ENCODE measurements at regions of chr19 and their contacts with region 1.

Region 1: GRCh38 chr19:34974646-34975045 is 10.6 kb upstream of the ZNF792 start:
- DNase-seq: no peak
- ATAC-seq: peak in 1 of 2 donors; percentile 7
- H3K4me3 ChIP-seq: no peak overlapping the region
- H3K27ac ChIP-seq: no peak overlapping the region
- H3K4me1 ChIP-seq: peaks cover 21% of the 10 kb centered on the region
- H3K27me3 ChIP-seq: no peaks in the 10 kb centered on the region
- CTCF ChIP-seq: no peak

Region 2: DNA sequence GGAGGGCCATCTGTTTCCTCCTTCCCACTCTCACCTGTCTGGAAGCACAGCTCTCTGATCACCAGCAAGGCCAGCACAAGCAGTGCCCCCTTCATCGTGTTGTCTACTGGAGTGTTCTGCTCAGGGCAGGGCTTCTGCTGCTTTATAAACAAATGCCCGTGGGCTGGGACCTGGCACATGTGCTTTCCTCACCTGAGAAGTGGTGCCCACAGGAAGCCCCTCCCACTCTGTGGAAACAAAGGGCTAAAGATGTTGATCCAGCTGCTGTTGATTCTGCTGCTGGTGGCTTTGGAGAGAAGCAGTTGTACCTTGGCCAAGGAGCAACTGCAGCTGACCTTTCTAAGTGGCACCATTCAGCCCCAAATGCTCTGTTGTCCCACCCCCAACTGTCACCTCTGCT is 267.0 kb before region 1 on chr19:
- intact Hi-C with region 1: no loop called
- DNase-seq: no peak
- ATAC-seq: no peak
- H3K4me3 ChIP-seq: no peak overlapping the region
- H3K27ac ChIP-seq: no peak overlapping the region
- H3K4me1 ChIP-seq: no peaks in the 10 kb centered on the region
- H3K27me3 ChIP-seq: no peaks in the 10 kb centered on the region
- CTCF ChIP-seq: no peak

Region 3: DNA sequence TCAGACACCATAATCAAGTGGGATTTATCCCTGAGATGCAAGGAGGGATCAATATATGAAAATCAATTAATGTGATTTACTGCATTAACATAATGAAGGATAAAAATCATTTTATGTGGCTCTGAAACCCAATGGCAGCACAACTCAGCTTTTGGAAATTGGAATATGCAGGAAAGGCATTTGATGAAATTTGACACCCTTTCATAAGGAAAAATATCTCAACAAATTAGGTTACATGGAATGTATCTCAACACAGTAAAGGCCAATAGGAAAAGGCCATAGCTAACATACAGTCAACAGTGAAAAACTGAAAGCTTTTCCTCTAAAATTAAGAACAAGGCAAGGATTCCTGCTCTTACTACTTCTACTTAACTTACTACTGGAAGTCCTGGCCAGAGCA is 79.9 kb before region 1 on chr19:
- intact Hi-C with region 1: no loop called
- DNase-seq: no peak
- ATAC-seq: no peak
- H3K4me3 ChIP-seq: no peak overlapping the region
- H3K27ac ChIP-seq: no peak overlapping the region
- H3K4me1 ChIP-seq: no peaks in the 10 kb centered on the region
- H3K27me3 ChIP-seq: no peaks in the 10 kb centered on the region
- CTCF ChIP-seq: no peak

Region 4: DNA sequence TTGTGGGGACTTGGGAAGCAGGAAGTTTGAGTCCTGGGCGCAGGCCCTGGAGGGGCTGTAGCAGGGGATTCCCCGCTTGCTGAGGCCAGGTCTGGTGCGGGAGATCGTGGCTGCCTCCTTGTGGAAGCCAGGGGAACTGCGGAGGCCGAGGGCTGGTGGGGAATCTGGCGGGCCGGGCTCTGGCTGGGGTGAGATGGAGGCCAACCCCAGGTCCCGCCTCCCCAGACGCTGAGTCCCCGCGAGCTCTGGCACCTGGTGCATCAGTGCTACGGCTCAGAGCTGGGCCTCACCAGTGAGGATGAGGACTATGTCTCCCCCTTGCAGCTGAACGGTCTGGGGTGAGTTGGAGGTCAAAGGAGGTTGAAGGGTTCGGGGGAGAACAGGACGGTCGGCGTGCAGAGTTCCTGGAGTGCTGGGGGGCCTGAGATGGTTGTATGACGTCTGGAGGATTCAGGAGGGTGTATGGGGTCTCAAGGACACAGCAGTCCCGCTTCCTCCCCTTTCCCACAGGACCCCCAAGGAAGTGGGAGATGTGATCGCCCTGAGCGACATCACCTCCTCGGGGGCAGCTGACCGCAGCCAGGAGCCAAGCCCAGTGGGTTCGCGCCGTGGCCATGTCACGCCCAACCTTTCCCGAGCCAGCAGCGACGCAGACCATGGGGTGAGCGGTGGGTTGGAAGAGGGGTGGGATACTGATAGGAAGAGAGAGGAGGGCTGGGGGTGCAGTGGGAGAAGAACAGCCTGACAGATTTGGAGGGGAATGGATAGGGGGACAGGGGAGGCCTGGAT is 38.6 kb after region 1 on chr19:
- intact Hi-C with region 1: loop called (anchors 5 kb)
- DNase-seq: peak; percentile 84
- ATAC-seq: peak; percentile 86 to 89
- H3K4me3 ChIP-seq: no peak overlapping the region
- H3K27ac ChIP-seq: peak overlapping the region; percentile 44
- H3K4me1 ChIP-seq: peaks cover 54% of the 10 kb centered on the region
- H3K27me3 ChIP-seq: no peaks in the 10 kb centered on the region
- CTCF ChIP-seq: peak; percentile 99